Sigmoid colon (tissue), 7 donors: ENCODE measurements at regions of chr16 and their contacts with region 1.

Region 1: DNA sequence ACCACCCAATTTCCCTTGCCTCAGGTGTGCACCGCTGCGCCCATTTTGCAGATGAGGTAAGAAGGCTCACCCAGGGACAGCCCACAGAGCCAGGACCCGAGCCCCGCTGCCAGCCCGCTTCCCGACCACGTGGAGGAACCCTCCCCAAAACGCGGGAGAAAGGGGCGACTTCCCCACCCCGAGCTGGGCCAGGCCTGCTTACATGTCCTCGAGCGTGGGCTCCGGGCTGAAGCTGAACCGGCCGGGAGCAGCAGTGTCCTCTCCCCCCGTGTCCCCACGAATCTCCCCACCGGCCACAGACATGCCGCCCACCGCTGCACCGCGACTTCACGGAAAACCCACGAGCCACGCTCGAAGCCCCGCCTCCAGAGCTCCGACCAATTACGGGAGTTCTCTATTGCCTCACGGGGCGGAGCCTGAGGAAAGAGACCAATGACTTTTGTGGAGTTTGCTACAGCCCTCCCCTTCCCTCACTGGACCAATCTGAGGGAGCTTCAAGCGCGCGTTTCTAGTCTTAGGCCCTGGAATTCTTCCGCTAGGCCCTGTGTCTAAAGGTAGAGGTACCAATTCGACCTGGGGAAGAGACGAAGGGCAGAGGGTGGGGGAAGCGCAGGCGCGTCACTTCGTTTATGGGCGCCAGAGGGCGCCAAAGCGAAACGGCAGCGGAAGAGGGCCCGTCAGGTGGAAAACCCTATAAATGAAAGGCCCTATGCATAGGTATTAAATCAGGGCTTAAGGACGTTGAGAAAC is at the start of gene DCTPP1:
- DNase-seq: peak; percentile 98
- H3K4me3 ChIP-seq: peak within 1 kb of the TSS; percentile 46 to 74 (median 56)
- H3K27ac ChIP-seq: peak within 1 kb of the TSS; percentile 79 to 84 (median 82)
- H3K4me1 ChIP-seq: peaks cover 0 to 21% (median 16%) of the 10 kb centered on the region in 4 donors
- H3K27me3 ChIP-seq: no peaks in the 10 kb centered on the region
- CTCF ChIP-seq: peak; percentile 60 to 82 (median 62)
- EP300 ChIP-seq: no peak
- POLR2A ChIP-seq: no peak
- total RNA-seq, gene DCTPP1: 10.5 to 19.9 (median 16.5) TPM

Region 2: GRCh38 chr16:30417529-30418349 is 12.1 kb before region 1 on chr16:
- intact Hi-C with region 1: no loop called
- DNase-seq: peak; percentile 92
- H3K4me3 ChIP-seq: peak overlapping the region; percentile 33 to 72 (median 57)
- H3K27ac ChIP-seq: peak overlapping the region; percentile 83 to 89 (median 88)
- H3K4me1 ChIP-seq: peaks cover 0 to 14% (median 12%) of the 10 kb centered on the region in 4 donors
- H3K27me3 ChIP-seq: no peaks in the 10 kb centered on the region
- CTCF ChIP-seq: peak in 1 of 4 experiments; percentile 26
- EP300 ChIP-seq: no peak
- POLR2A ChIP-seq: no peak

Region 3: GRCh38 chr16:30534368-30535105 is 104.7 kb after region 1 on chr16 and contains the start of gene ZNF747:
- intact Hi-C with region 1: loop called (anchors 2 kb)
- DNase-seq: peak; percentile 97
- H3K4me3 ChIP-seq: peak within 1 kb of the TSS; percentile 45 to 85 (median 66)
- H3K27ac ChIP-seq: peak within 1 kb of the TSS; percentile 89 to 97 (median 94)
- H3K4me1 ChIP-seq: peaks cover 0 to 31% (median 25%) of the 10 kb centered on the region in 4 donors
- H3K27me3 ChIP-seq: no peaks in the 10 kb centered on the region
- CTCF ChIP-seq: no peak
- EP300 ChIP-seq: no peak
- POLR2A ChIP-seq: peak; percentile 50 to 65
- total RNA-seq, gene ZNF747: 10.3 to 15.5 (median 13.1) TPM